HepG2 (cell line): ENCODE measurements at regions of chr11 and their contacts with region 1.

Region 1: DNA sequence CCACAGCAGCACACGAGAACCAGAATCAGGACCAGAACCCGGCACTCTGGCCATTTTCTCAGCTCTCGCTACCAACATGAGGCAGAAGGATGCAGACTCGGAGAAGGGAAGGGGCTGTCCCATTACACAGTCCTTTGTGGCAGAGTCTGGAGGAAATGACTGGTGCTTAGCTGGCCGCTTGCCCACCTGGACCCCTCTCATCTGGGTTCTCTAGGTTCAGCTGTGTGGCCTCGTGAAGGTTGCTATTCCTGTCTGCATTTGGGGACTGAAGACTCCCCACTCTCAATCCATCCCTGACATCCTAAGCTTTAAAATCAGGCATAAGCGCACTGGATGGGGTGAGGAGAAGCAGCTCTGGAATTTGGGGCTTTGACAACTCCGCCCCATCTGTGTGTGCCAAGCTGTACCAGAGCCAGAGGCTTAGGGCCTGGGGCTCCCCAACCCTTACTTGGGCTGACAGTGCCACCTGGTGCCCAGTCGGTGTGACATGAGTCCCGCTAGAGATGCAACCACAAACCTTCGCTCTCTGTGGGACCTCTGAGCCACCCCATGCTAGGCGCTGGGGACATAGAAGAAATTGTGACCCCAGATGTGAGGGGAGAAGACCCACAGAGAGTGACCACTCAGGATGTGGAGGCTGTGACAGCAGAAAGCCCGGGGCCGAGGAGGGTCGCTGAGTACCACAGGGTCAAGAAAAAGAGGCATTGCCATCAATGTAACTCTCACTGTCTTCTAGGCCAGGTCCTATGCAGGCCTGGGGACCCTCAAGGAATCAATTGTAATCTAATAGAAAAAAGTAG is 35.9 kb upstream of the FCHSD2 start:
- DNase-seq: peak; percentile 73
- ATAC-seq: peak; percentile 72
- H3K4me3 ChIP-seq: peak overlapping the region; percentile 24 to 64 (median 29); a peak in 5 of 6 replicates
- H3K27ac ChIP-seq: peak overlapping the region; percentile 99
- H3K4me1 ChIP-seq: peaks cover 71% of the 10 kb centered on the region
- H3K27me3 ChIP-seq: no peaks in the 10 kb centered on the region
- CTCF ChIP-seq: peak; percentile 99
- EP300 ChIP-seq: 0 out of 4 replicates have a peak, but pooled peaks of 1 of the 2 experiments have one; percentile 7
- POLR2A ChIP-seq: no peak
- RAD21 ChIP-seq: peak; percentile 98

Region 2: GRCh38 chr11:72831513-72832300 is 346.3 kb before region 1 on chr11:
- CTCF ChIA-PET with region 1: interaction called, 7 read pairs
- POLR2A ChIA-PET with region 1: interaction called, 3 read pairs
- in situ Hi-C with region 1: loop called (anchors 5 kb)
- intact Hi-C with region 1: loop called (anchors 1 kb)
- DNase-seq: peak; percentile 63
- ATAC-seq: peak; percentile 86
- H3K4me3 ChIP-seq: no peak overlapping the region
- H3K27ac ChIP-seq: no peak overlapping the region
- H3K4me1 ChIP-seq: peaks cover 18% of the 10 kb centered on the region
- H3K27me3 ChIP-seq: no peaks in the 10 kb centered on the region
- CTCF ChIP-seq: peak; percentile 92
- EP300 ChIP-seq: no peak
- POLR2A ChIP-seq: no peak
- RAD21 ChIP-seq: peak; percentile 85

Region 3: GRCh38 chr11:73059915-73060314 is 118.1 kb before region 1 on chr11:
- CTCF ChIA-PET with region 1: no interaction called
- POLR2A ChIA-PET with region 1: interaction called, 3 read pairs
- in situ Hi-C with region 1: no loop called
- intact Hi-C with region 1: loop called (anchors 5 kb)
- DNase-seq: no peak
- ATAC-seq: no peak
- H3K4me3 ChIP-seq: no peak overlapping the region
- H3K27ac ChIP-seq: no peak overlapping the region
- H3K4me1 ChIP-seq: peaks cover 68% of the 10 kb centered on the region
- H3K27me3 ChIP-seq: no peaks in the 10 kb centered on the region
- CTCF ChIP-seq: no peak
- EP300 ChIP-seq: no peak
- POLR2A ChIP-seq: no peak
- RAD21 ChIP-seq: no peak

Region 4: GRCh38 chr11:73095613-73096012 is 82.4 kb before region 1 on chr11:
- CTCF ChIA-PET with region 1: no interaction called
- POLR2A ChIA-PET with region 1: no interaction called
- in situ Hi-C with region 1: no loop called
- intact Hi-C with region 1: no loop called
- DNase-seq: no peak
- ATAC-seq: no peak
- H3K4me3 ChIP-seq: no peak overlapping the region
- H3K27ac ChIP-seq: no peak overlapping the region
- H3K4me1 ChIP-seq: 0 out of 2 replicates have a peak, but pooled peaks cover 7% of the 10 kb centered on the region
- H3K27me3 ChIP-seq: no peaks in the 10 kb centered on the region
- CTCF ChIP-seq: no peak
- EP300 ChIP-seq: no peak
- POLR2A ChIP-seq: no peak
- RAD21 ChIP-seq: no peak

Region 5: GRCh38 chr11:73141848-73142286 is 36.1 kb before region 1 on chr11:
- CTCF ChIA-PET with region 1: interaction called, 12 read pairs
- POLR2A ChIA-PET with region 1: interaction called, 133 read pairs
- in situ Hi-C with region 1: loop called (anchors 5 kb)
- intact Hi-C with region 1: loop called (anchors 1 kb)
- DNase-seq: peak; percentile 47
- ATAC-seq: peak; percentile 36
- H3K4me3 ChIP-seq: peak overlapping the region; percentile 78 to 99 (median 91)
- H3K27ac ChIP-seq: peak overlapping the region; percentile 95
- H3K4me1 ChIP-seq: peaks cover 65% of the 10 kb centered on the region
- H3K27me3 ChIP-seq: no peaks in the 10 kb centered on the region; a peak in 1 of 5 replicates
- CTCF ChIP-seq: no peak
- EP300 ChIP-seq: no peak
- POLR2A ChIP-seq: peak in 1 of 2 experiments; percentile 37; a peak in 2 of 4 replicates
- RAD21 ChIP-seq: no peak

Region 6: GRCh38 chr11:73164803-73165540 is 13.0 kb before region 1 on chr11:
- CTCF ChIA-PET with region 1: no interaction called
- POLR2A ChIA-PET with region 1: interaction called, 78 read pairs
- in situ Hi-C with region 1: no loop called
- intact Hi-C with region 1: no loop called
- DNase-seq: no peak
- ATAC-seq: peak; percentile 14
- H3K4me3 ChIP-seq: no peak overlapping the region
- H3K27ac ChIP-seq: peak overlapping the region; percentile 65
- H3K4me1 ChIP-seq: peaks cover 97% of the 10 kb centered on the region
- H3K27me3 ChIP-seq: no peaks in the 10 kb centered on the region
- CTCF ChIP-seq: no peak
- EP300 ChIP-seq: no peak
- POLR2A ChIP-seq: no peak
- RAD21 ChIP-seq: no peak